ENCODE measurements at regions of chr9 and their contacts with region 1.

Region 1: GRCh38 chr9:127869310-127870152 is 7.9 kb downstream of the AK1 start:
- DNase-seq: peak; percentile 91 to 94
- ATAC-seq: peak; percentile 43 to 85 (median 78)
- H3K4me3 ChIP-seq: no peak overlapping the region
- H3K27ac ChIP-seq: peak overlapping the region in 9 of 10 donors; percentile 7 to 92 (median 47)
- H3K4me1 ChIP-seq: peaks cover 9 to 64% (median 42%) of the 10 kb centered on the region in 9 donors
- H3K27me3 ChIP-seq: no peaks in the 10 kb centered on the region
- CTCF ChIP-seq: peak; percentile 85 to 92 (median 89)

Region 2: GRCh38 chr9:127734747-127735529 is 134.6 kb before region 1 on chr9 and contains the start of gene TOR2A:
- intact Hi-C with region 1: loop called in 9 of 10 experiments (anchors 1 to 10 kb)
- DNase-seq: peak; percentile 98 to 99
- ATAC-seq: peak; percentile 94 to 97 (median 95)
- H3K4me3 ChIP-seq: peak within 1 kb of the TSS; percentile 46 to 95 (median 78)
- H3K27ac ChIP-seq: peak within 1 kb of the TSS; percentile 90 to 99 (median 97)
- H3K4me1 ChIP-seq: peaks cover 10 to 35% (median 19%) of the 10 kb centered on the region in 9 donors
- H3K27me3 ChIP-seq: no peaks in the 10 kb centered on the region
- CTCF ChIP-seq: peak; percentile 90 to 99 (median 95)
- total RNA-seq, gene TOR2A: 1.5 to 6.3 (median 2.2) TPM

Region 3: GRCh38 chr9:127742435-127743088 is 127.0 kb before region 1 on chr9:
- intact Hi-C with region 1: loop called in 6 of 10 experiments (anchors 2 to 10 kb)
- DNase-seq: no peak
- ATAC-seq: peak in 4 of 8 donors; percentile 11 to 54 (median 30)
- H3K4me3 ChIP-seq: peak overlapping the region in 9 of 10 donors; percentile 18 to 51 (median 41)
- H3K27ac ChIP-seq: peak overlapping the region in 4 of 10 donors; percentile 4 to 65 (median 28)
- H3K4me1 ChIP-seq: peaks cover 2 to 40% (median 21%) of the 10 kb centered on the region in 9 donors
- H3K27me3 ChIP-seq: no peaks in the 10 kb centered on the region
- CTCF ChIP-seq: no peak

Region 4: DNA sequence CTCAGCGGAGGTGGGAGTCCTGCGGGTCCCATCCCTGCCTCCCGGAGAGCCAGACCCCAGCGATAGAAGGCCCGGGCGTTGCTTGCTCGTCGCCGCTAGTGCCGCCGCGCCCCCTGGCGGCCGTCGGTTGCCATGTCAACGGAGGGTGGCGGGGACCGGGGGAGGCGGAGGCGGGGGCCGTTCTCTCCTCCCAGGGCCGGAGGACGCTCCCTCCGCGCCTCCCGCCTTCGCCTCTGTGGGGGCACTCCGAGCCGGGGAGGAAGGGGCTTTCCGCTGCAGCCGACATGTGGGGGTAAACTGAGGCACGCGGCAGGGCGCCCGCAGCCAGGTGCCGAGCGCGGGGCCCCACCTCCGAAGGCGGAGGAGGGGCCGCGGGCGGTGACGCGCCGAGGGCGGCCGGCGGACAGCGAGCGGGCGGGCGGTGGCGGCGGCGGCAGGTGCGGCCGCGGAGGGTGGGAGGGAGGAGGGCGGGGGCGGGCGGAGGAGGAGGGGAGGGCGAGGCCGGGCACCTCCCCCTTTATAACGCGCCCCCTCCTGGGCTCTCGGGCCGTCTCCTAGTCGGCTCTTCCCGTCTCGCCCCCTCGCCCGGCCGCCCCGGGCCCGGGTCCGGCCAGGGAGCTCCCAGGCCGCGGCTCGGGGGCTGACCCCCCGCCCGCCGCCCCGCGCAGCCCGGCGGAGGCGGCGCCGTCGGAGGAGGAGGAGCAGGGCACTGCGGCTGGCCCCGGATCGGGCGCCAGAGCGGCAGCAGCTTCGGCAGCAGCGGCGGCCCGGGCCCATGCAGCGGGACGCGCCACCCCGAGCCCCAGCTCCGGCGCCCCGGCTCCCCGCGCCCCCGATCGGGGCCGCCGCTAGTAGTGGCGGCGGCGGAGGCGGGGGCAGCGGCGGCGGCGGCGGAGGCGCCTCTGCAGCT is 84.3 kb before region 1 on chr9:
- intact Hi-C with region 1: loop called in 8 of 10 experiments (anchors 2 to 5 kb)
- DNase-seq: peak; percentile 89 to 92
- ATAC-seq: peak; percentile 62 to 78 (median 70)
- H3K4me3 ChIP-seq: peak overlapping the region; percentile 19 to 100 (median 97)
- H3K27ac ChIP-seq: peak overlapping the region; percentile 88 to 99 (median 98)
- H3K4me1 ChIP-seq: peaks cover 9 to 82% (median 52%) of the 10 kb centered on the region in 9 donors
- H3K27me3 ChIP-seq: no peaks in the 10 kb centered on the region
- CTCF ChIP-seq: peak; percentile 90 to 96 (median 92)

Region 5: GRCh38 chr9:127802576-127803443 is 66.7 kb before region 1 on chr9 and contains the start of gene FPGS:
- intact Hi-C with region 1: loop called in 3 of 10 experiments (anchors 5 kb)
- DNase-seq: peak; percentile 88 to 91
- ATAC-seq: peak; percentile 91 to 96 (median 94)
- H3K4me3 ChIP-seq: peak within 1 kb of the TSS; percentile 53 to 79 (median 70)
- H3K27ac ChIP-seq: peak within 1 kb of the TSS; percentile 81 to 98 (median 93)
- H3K4me1 ChIP-seq: peaks cover 8 to 38% (median 22%) of the 10 kb centered on the region in 9 donors
- H3K27me3 ChIP-seq: no peaks in the 10 kb centered on the region
- CTCF ChIP-seq: no peak
- total RNA-seq, gene FPGS: 40.2 to 58.5 (median 46.5) TPM

Region 6: DNA sequence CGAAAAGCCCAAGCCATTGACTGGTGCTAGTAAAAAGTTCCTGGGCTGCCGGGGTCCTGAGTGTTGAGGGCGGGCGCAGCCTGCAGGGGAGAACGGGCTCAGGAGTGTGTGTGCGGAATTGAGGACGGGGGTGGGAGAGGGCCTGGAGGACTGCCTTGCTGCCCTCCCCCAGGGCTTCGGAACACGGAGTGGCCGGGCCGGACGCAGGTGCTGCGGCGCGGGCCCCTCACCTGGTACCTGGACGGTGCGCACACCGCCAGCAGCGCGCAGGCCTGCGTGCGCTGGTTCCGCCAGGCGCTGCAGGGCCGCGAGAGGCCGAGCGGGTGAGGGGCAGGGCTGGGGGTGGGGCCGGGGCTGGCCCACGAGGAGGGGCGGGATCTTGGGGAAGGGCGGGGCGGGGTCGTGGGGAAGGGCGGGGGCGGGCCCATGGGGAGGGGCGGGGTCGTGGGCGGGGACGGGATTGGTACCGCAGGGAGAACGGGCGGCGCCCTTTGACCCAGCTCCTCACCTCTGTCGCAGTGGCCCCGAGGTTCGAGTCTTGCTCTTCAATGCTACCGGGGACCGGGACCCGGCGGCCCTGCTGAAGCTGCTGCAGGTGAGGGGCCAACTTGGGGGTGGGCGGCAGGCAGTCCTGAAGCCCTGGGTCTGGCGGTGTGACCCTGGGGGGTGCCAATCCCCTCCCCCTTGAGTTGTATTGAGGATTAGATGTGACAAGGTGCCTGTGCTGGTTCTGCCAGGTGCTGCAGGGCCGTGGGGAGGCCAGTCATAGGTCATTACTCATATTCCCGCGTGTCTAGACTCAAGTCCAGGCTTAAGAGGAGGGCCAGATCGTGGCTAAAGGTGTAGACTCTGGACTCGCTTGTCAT is 59.8 kb before region 1 on chr9:
- intact Hi-C with region 1: loop called in 4 of 10 experiments (anchors 5 kb)
- DNase-seq: peak in 1 of 2 donors; percentile 50
- ATAC-seq: peak in 5 of 8 donors; percentile 18 to 29 (median 23)
- H3K4me3 ChIP-seq: peak overlapping the region in 1 of 10 donors; percentile 14
- H3K27ac ChIP-seq: peak overlapping the region in 7 of 10 donors; percentile 3 to 73 (median 53)
- H3K4me1 ChIP-seq: peaks cover 0 to 41% (median 9%) of the 10 kb centered on the region in 9 donors
- H3K27me3 ChIP-seq: no peaks in the 10 kb centered on the region
- CTCF ChIP-seq: no peak

Region 7: DNA sequence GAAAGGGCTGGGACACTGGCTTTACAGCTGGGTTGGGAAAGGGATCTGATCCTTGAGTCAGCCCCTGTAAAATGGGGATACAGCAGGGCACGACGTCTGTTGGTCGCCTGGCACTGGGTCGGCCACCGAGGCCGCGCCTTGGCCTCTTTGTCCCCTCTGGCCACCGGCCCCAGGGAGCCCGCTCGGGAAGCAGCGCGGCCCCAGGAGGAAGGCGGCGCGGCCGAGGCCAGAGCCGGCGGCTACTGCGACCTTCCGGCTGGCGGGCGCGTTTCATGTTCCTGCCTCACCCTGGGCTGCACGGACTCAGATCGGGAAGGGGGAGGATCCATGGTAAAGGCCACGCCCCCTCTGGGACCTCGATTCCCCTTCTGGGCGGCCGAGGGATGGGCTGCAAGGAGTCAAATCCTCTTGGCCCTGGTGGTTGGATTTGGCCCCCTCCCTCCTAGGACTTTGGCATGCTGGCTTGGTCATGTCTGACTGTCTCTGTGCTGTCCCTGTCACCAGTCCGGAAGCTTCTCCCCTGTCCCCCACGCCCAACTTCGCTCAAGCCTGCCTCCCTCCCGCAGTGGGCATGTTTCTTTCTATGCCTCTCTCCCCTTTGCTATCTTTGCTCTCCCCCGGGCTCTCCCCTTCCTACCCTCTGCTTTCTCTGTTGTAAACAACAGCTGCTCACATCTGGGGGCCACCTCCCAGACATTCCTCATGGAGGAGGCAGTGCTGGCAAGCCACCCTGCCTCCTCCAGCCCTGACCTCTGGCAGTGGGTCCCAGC is 41.1 kb before region 1 on chr9:
- intact Hi-C with region 1: loop called in 5 of 10 experiments (anchors 5 kb)
- DNase-seq: peak; percentile 91 to 94
- ATAC-seq: peak; percentile 77 to 91 (median 87)
- H3K4me3 ChIP-seq: peak overlapping the region in 8 of 10 donors; percentile 12 to 38 (median 32)
- H3K27ac ChIP-seq: peak overlapping the region; percentile 77 to 99 (median 87)
- H3K4me1 ChIP-seq: peaks cover 19 to 80% (median 68%) of the 10 kb centered on the region in 9 donors
- H3K27me3 ChIP-seq: no peaks in the 10 kb centered on the region
- CTCF ChIP-seq: peak in 3 of 9 donors; percentile 12 to 35 (median 33)